MCF 10A (cell line): ENCODE measurements at regions of chr11 and their contacts with region 1.

Region 1: GRCh38 chr11:88543902-88544655 is 206.5 kb upstream of the CTSC start:
- DNase-seq: peak; percentile 92
- H3K4me3 Mint-ChIP-seq: no peak overlapping the region
- H3K27ac Mint-ChIP-seq: peak overlapping the region; percentile 57
- H3K4me1 Mint-ChIP-seq: peaks cover 7% of the 10 kb centered on the region
- H3K27me3 Mint-ChIP-seq: no peaks in the 10 kb centered on the region
- CTCF ChIP-seq: peak; percentile 98

Region 2: DNA sequence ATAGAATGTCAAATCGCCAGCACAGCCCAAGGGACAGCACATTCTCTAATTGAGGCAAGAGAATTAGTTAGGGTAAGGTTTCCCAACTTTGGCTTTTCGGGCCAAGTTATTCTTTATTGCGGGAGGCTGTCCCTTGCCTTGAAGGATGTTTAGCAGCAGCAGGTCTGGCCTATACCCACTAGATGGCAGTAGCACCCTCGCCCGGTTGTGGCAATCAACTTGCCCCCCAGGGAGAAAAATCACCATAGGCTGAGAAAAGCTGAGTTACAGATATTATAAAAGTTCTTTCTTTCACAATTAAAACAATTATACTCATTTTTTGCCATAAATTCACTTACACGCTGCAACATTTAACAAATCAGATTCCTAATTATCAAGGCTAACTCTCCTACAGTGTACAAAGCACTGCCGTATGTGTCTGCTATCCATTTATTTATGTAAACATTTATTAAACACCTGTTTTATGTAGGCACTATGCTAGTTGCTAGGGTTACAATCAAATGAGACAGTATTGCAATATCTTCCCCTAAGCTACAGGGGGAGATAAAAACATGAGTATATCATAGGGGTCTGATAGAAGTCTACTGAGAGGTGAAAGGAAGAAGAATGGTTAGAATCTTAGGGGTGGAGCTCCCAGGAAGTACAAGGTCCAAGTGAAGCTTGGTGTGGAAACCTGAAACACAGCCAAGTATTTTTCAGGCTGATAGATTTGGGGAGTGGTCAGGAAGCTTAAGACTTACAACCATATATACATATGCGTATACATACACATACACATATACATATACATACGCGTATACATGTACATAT is 821.1 kb before region 1 on chr11:
- CTCF ChIA-PET with region 1: interaction called, 12 read pairs
- POLR2A ChIA-PET with region 1: no interaction called
- intact Hi-C with region 1: loop called (anchors 1 kb)
- DNase-seq: peak; percentile 43
- H3K4me3 Mint-ChIP-seq: no peak overlapping the region
- H3K27ac Mint-ChIP-seq: no peak overlapping the region
- H3K4me1 Mint-ChIP-seq: peaks cover 11% of the 10 kb centered on the region
- H3K27me3 Mint-ChIP-seq: peaks cover 12% of the 10 kb centered on the region
- CTCF ChIP-seq: peak; percentile 84

Region 3: DNA sequence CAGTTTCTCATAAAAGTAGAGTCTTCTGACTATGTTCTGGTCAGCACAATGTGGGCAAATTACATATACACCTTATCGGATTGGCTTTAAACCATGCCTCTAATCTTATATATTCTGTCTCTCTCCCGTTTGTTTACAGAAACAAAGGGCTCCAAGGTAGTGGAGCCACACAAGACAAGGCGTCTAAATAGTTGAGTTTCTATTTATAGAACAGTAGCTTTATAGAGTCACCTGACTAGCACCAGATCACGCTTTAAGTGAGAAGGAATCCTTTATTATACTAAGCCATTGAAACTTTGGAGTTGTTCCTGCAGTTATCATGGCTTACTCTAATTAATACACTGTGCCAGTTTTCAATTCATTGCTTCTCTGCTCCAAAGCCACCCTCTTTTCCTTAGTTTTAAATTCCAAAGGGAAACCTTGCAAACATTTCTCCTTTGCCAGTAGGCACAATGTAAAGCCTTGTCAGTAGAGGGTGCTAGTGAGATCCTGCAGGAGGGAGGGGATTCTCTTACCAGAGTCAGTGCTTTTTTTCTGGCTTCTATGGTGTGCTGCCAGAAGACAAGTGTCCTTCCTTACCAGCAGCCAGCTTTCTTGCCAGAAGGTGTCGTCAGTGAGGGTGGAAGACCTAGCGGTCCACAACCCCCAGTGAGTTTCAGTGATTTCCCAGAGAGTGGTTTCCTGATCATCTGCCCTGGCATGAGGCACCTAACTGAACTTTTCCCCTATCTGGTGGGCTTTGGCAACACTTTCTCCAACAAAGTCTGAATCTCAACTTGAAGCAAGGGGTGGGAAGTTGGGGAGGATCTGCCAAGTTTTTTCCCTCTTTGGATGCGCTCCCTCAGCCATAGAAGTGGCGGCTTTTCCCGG is 440.5 kb before region 1 on chr11:
- CTCF ChIA-PET with region 1: interaction called, 4 read pairs
- POLR2A ChIA-PET with region 1: no interaction called
- intact Hi-C with region 1: loop called (anchors 1 kb)
- DNase-seq: peak; percentile 82
- H3K4me3 Mint-ChIP-seq: no peak overlapping the region
- H3K27ac Mint-ChIP-seq: no peak overlapping the region
- H3K4me1 Mint-ChIP-seq: peaks cover 23% of the 10 kb centered on the region
- H3K27me3 Mint-ChIP-seq: no peaks in the 10 kb centered on the region
- CTCF ChIP-seq: peak; percentile 51

Region 4: DNA sequence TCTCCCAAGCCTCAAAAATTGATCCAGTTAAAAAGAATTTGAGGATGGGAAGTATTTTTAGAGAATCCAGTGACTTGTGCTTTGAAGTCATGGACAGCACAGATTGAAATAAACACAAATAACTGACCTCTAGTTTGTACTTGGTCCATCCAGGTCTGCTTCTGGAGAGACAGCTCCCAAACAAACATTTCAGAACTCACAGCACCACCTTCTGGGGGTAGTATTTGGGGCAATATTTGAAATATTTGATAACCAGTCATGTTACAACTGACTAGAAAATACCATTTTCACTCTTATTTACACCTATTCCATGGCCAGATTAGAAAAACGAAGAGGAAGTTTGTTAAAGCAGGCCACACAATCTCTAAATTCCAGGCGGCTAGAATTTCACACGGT is 262.8 kb before region 1 on chr11:
- CTCF ChIA-PET with region 1: interaction called, 12 read pairs
- POLR2A ChIA-PET with region 1: no interaction called
- intact Hi-C with region 1: no loop called
- DNase-seq: peak; percentile 33
- H3K4me3 Mint-ChIP-seq: no peak overlapping the region
- H3K27ac Mint-ChIP-seq: no peak overlapping the region
- H3K4me1 Mint-ChIP-seq: peaks cover 7% of the 10 kb centered on the region
- H3K27me3 Mint-ChIP-seq: no peaks in the 10 kb centered on the region
- CTCF ChIP-seq: peak; percentile 28

Region 5: GRCh38 chr11:88414385-88414861 is 129.7 kb before region 1 on chr11:
- CTCF ChIA-PET with region 1: interaction called, 3 read pairs
- POLR2A ChIA-PET with region 1: interaction called, 3 read pairs
- intact Hi-C with region 1: loop called (anchors 5 kb)
- DNase-seq: peak; percentile 83
- H3K4me3 Mint-ChIP-seq: no peak overlapping the region
- H3K27ac Mint-ChIP-seq: peak overlapping the region; percentile 20
- H3K4me1 Mint-ChIP-seq: peaks cover 37% of the 10 kb centered on the region
- H3K27me3 Mint-ChIP-seq: no peaks in the 10 kb centered on the region
- CTCF ChIP-seq: no peak